Activated T-helper 2 cell treated with anti-CD3 and anti-CD28 coated beads, Interferon-gamma antibody, Interleukin-2, Interleukin-4, amounts not matched to agents 10 μg/mL and 5 μg/mL and 100 μg/mL, durations not matched to agents 14 hours and 24 hours and 36 hours (primary cell): ENCODE measurements at regions of chr2 and their contacts with region 1.

Region 1: DNA sequence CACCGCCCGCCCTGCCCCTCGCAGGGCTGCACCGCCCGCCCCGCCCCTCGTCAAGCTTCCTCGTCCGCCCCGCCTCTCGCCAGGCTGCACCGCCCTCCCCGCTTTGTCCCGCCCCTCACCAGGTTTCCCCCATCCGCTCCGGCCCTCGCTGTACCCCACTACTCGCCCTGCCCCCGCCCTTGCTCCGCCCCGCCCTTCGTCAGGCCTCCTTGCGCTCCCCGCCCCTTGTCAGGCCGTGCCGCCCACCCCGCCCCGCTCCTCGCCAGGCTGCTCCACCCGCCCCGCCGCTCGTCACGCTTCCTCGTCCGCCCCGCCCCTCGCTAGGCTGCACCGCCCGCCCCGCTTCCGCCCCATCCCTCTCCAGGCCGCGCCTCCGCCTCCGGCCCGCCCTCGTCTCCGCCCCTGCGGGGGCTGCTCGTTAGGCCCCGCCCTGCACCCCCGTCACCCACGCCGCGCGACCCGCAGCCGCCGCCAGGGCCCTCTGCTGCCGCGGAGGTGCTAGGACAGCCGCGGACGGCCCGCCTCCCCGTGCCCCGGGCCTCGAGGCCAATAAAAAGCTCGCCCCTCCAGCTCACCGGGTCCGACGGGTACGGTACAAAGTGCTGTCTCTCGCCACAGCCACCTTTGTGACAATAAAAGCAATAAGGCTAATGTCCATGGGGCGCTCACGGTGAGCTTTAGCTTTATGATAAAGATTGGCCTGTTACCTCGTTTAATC is 574 bp upstream of the DNPEP start:
- DNase-seq: peak; percentile 96
- H3K4me3 Mint-ChIP-seq: peak overlapping the region; percentile 65
- H3K27ac Mint-ChIP-seq: peak overlapping the region; percentile 75
- H3K4me1 Mint-ChIP-seq: peaks cover 7% of the 10 kb centered on the region
- H3K27me3 Mint-ChIP-seq: peaks cover 8% of the 10 kb centered on the region

Region 2: DNA sequence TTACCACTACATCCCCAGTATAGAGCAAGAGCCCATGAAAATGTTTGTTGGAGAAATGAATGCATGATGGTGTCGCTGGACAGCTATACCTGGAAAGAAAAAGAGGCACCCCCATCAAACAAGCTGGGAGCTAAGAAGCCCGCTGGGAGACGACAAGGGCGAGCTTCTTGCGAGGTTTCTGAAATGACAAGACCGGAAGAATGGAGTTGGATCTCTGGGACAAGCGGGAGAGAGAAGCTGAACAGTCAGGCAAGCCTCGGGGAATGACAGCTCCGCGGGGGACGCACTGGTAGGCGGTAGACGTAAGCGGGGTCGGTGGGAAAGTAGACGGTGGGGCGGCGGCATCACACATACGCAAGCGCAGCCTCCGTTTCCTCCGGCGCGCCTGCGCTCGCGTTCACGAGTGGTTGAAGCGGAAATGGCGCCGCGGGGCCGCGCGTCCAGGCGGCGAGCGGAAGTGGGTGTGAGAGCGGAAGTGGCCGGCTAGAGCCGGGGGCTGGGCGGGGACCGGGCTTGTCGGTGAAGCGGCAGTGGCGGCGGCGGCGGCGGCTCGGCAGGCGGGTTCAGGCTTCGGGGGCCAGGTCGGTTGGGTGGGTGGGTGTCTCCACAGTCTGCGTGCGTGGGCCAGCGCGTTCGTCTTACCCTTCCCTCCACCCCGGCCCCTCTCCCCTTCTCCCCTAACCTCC is 1171.5 kb before region 1 on chr2 and contains the start of gene ARPC2:
- intact Hi-C with region 1: loop called (anchors 5 kb)
- DNase-seq: peak; percentile 95
- H3K4me3 Mint-ChIP-seq: peak within 1 kb of the TSS; percentile 89
- H3K27ac Mint-ChIP-seq: peak within 1 kb of the TSS; percentile 95
- H3K4me1 Mint-ChIP-seq: peaks cover 35% of the 10 kb centered on the region
- H3K27me3 Mint-ChIP-seq: peaks cover 2% of the 10 kb centered on the region
- total RNA-seq, gene ARPC2: 639 and 643 TPM in 2 replicates

Region 3: GRCh38 chr2:219087361-219087760 is 300.9 kb before region 1 on chr2:
- intact Hi-C with region 1: no loop called
- DNase-seq: no peak
- H3K4me3 Mint-ChIP-seq: no peak overlapping the region
- H3K27ac Mint-ChIP-seq: no peak overlapping the region
- H3K4me1 Mint-ChIP-seq: peaks cover 7% of the 10 kb centered on the region
- H3K27me3 Mint-ChIP-seq: no peaks in the 10 kb centered on the region

Region 4: GRCh38 chr2:219206442-219207253 is 181.6 kb before region 1 on chr2 and contains the start of gene ZFAND2B:
- intact Hi-C with region 1: loop called (anchors 1 kb)
- DNase-seq: peak; percentile 94
- H3K4me3 Mint-ChIP-seq: peak within 1 kb of the TSS; percentile 84
- H3K27ac Mint-ChIP-seq: peak within 1 kb of the TSS; percentile 90
- H3K4me1 Mint-ChIP-seq: peaks cover 38% of the 10 kb centered on the region
- H3K27me3 Mint-ChIP-seq: no peaks in the 10 kb centered on the region
- total RNA-seq, gene ZFAND2B: 27.3 and 33.5 TPM in 2 replicates

Region 5: DNA sequence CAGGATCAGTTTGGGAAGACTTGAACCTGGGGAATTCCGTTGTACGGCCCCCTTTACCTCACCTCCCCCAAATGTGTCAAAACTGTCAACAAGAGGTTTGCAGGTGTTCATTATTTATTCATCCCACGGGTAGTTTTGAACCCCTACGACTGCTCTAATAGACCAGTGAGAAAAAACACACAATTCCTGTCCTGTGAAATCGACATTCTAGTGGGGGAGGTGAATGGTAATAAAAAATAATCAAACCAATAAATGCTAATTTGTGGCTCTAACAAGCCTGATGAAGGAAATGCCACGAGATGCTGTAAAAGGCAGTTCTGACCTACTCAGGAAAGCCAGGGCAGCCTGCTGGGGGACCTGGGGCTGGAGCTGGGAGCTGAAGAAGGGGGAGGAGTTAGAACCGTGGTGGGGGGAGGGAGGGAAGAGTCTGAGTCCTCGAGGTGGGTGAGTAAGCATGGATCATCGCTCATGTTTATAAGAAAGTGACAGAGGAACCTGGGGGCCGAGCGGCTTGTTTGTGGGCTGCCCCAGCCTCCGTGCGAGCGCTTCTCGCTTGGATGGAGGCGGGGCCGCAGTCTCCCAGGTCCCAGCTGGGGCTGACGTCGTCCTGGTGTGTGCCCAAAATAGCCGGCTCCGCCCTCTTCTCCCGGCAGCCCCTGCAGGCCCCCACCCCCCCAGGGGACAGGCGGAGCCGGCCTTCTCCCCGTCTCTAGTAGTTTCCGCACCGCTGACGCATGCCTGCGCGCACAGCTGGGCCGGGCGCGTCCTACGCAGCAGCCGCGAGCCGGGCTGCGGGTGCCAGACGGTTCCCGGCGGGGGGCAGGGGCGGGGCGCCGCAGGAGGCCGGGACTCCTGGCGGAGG is 109.4 kb before region 1 on chr2 and contains the start of gene DNAJB2:
- intact Hi-C with region 1: loop called (anchors 1 kb)
- DNase-seq: peak; percentile 98
- H3K4me3 Mint-ChIP-seq: peak within 1 kb of the TSS; percentile 85
- H3K27ac Mint-ChIP-seq: peak within 1 kb of the TSS; percentile 91
- H3K4me1 Mint-ChIP-seq: peaks cover 39% of the 10 kb centered on the region
- H3K27me3 Mint-ChIP-seq: peaks cover 3% of the 10 kb centered on the region
- total RNA-seq, gene DNAJB2: 49.8 and 55.6 TPM in 2 replicates

Region 6: GRCh38 chr2:219543601-219544358 is 155.5 kb after region 1 on chr2 and contains the starts of genes CHPF and TMEM198:
- intact Hi-C with region 1: loop called (anchors 1 kb)
- DNase-seq: peak; percentile 93
- H3K4me3 Mint-ChIP-seq: peak within 1 kb of the TSS; percentile 91
- H3K27ac Mint-ChIP-seq: peak within 1 kb of the TSS; percentile 71
- H3K4me1 Mint-ChIP-seq: peaks cover 11% of the 10 kb centered on the region
- H3K27me3 Mint-ChIP-seq: peaks cover 16% of the 10 kb centered on the region
- total RNA-seq, gene CHPF: 40.2 and 41.9 TPM in 2 replicates
- total RNA-seq, gene TMEM198: 3.8 and 4.9 TPM in 2 replicates